ENCODE measurements at regions of chr14 and their contacts with region 1.

Region 1: GRCh38 chr14:56474419-56475022 is 105.1 kb upstream of the TMEM260 start:
- DNase-seq: no peak
- H3K4me3 ChIP-seq: no peak overlapping the region
- CTCF ChIP-seq: peak; percentile 51

Region 2: GRCh38 chr14:55665067-55665675 is 809.4 kb before region 1 on chr14:
- CTCF ChIA-PET with region 1: interaction called, 14 read pairs
- POLR2A ChIA-PET with region 1: no interaction called
- DNase-seq: no peak
- H3K4me3 ChIP-seq: no peak overlapping the region
- CTCF ChIP-seq: no peak

Region 3: DNA sequence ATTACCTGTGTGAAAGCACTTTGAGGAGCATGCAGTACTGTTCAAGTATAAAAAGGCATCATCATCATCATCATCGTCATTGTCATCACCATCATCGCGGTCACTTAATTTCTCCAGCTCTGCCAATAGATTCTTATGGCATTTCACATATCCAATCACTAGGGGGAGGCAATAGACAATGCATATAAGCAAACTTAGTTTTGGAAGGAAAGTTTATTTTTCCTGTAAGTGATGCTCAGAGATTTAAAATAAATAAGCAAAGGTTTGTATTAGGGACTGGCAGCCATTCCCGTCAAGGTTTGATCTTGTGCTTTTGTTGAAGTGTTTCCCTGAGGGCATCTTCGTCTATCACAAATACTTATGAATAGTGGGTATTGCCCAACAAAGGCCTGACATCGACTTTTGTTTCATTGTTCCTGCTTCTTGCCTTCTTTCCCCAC is 767.1 kb before region 1 on chr14:
- CTCF ChIA-PET with region 1: interaction called, 57 read pairs
- POLR2A ChIA-PET with region 1: no interaction called
- DNase-seq: peak; percentile 23
- H3K4me3 ChIP-seq: no peak overlapping the region
- CTCF ChIP-seq: peak; percentile 54

Region 4: DNA sequence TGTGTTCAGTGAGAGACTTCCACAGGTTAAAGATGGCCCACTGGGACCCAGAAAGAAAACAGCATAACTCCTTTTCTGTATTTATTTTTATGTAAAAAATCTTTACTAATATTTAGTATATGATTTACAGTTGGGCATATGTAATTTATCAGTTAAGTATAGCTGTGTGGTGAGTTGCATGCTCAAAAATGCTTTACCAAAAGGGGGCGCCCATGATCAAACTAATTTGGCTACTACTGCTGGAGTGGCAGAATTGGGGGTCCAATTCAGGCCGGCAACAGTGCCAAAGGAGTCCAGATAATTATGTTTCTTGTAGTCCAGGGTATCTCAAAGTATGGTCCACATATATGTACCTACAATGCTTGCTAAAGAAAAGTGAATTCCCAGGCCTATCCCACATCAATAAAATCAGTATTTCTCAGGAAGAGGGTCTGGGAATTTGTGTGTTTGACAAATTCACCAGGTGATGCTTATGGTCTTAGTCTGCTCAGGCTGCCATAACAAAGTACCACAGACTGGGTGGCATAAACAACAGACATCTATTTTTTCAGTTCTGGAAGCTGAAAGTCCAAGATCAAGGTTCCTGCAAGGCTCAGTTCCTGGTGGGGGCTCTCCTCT is 742.5 kb before region 1 on chr14:
- CTCF ChIA-PET with region 1: interaction called, 52 read pairs
- POLR2A ChIA-PET with region 1: no interaction called
- DNase-seq: no peak
- H3K4me3 ChIP-seq: no peak overlapping the region
- CTCF ChIP-seq: peak; percentile 56

Region 5: GRCh38 chr14:56491299-56492285 is 17.1 kb after region 1 on chr14:
- CTCF ChIA-PET with region 1: interaction called, 78 read pairs
- POLR2A ChIA-PET with region 1: no interaction called
- DNase-seq: no peak
- H3K4me3 ChIP-seq: no peak overlapping the region
- CTCF ChIP-seq: peak; percentile 72

Region 6: DNA sequence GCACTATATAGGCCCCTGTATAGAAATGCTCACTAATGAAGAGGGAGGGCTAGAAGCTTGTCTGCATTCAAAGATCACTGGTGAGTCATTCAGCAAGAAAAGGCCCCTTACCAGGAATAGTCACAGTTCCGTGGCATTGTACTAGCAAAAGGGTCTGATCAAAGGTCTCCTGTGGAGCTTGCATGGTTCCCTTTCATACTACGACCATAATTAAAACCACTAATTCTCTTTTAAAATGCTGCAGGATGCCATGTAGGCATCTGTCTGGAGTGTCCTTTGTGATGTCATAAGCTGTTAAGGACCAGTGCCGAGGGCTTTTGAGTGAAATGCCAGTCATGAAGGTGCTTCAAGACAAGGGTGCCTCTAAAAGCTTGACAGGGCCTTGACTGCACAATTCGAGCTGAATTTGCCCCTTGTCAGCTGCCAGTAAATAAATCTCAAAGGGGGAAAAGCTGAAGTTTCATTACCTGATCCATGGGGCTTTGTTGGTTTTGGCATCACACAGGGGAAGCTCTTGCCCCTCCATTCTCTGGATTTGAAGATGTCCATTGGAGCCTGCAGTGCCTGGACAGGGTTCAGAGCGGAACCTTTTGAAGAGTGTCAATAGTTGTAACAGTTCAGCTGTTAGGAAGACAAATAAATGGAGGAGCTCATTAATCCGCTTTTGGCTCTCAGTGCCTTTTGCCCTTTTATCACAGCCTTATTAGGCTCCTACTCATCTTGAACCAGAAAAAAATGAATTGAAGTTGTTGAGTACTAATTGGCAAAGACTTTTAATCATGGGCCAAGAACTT is 174.2 kb after region 1 on chr14:
- CTCF ChIA-PET with region 1: no interaction called
- POLR2A ChIA-PET with region 1: no interaction called
- DNase-seq: no peak
- H3K4me3 ChIP-seq: no peak overlapping the region
- CTCF ChIP-seq: no peak

Measured in AG04449 (cell line).